Aorta (tissue), 5 donors: ENCODE measurements at regions of chr3 and their contacts with region 1.

Region 1: GRCh38 chr3:39107388-39108199 is at the starts of genes GORASP1 and TTC21A:
- DNase-seq: peak; percentile 95 to 96
- ATAC-seq: peak; percentile 95
- H3K4me3 ChIP-seq: peak within 1 kb of the TSS; percentile 71 to 86
- H3K27ac ChIP-seq: peak within 1 kb of the TSS; percentile 50 to 51
- H3K4me1 ChIP-seq: no peaks in the 10 kb centered on the region
- H3K27me3 ChIP-seq: no peaks in the 10 kb centered on the region
- total RNA-seq, gene GORASP1: 52.3 to 62.2 TPM
- total RNA-seq, gene TTC21A: 3.6 to 11.6 TPM

Region 2: GRCh38 chr3:38834110-38834509 is 273.5 kb before region 1 on chr3:
- intact Hi-C with region 1: no loop called
- DNase-seq: peak; percentile 82 to 83
- ATAC-seq: peak; percentile 81
- H3K4me3 ChIP-seq: no peak overlapping the region
- H3K27ac ChIP-seq: peak overlapping the region; percentile 1 to 2
- H3K4me1 ChIP-seq: no peaks in the 10 kb centered on the region
- H3K27me3 ChIP-seq: no peaks in the 10 kb centered on the region

Region 3: DNA sequence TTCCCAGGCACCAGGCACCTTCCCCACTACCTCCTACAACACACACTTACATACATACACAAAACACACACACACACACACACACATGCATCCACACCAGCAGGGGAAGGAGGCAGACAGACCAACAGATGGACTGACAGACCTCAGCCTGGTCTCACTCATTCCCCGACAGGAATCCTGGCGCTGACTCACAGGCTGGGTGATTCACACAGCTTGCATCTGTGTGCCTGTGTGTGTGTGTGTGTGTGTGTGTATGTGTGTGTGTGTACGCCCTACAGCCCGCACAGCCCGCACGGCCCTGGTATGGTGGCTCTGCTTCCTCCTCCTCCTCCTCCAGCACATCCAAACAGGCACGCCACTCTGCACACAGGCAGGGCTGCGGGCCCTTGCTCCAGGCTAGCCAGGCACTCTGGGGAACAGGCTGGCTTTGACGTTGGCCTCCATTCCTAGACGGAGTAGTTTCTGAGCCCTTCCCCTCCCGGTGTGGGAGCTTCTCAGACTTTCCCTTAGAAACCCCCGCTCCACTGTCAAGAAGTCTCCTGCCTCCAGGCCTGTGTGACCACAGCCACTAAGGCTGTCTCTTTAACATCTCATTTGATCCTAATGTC is 39.5 kb after region 1 on chr3:
- intact Hi-C with region 1: loop called in 1 of 2 experiments (anchors 2 kb)
- DNase-seq: peak; percentile 93 to 94
- ATAC-seq: peak; percentile 75
- H3K4me3 ChIP-seq: no peak overlapping the region
- H3K27ac ChIP-seq: peak overlapping the region; percentile 23 to 71
- H3K4me1 ChIP-seq: peaks cover 10% of the 10 kb centered on the region in 2 donors
- H3K27me3 ChIP-seq: no peaks in the 10 kb centered on the region

Region 4: DNA sequence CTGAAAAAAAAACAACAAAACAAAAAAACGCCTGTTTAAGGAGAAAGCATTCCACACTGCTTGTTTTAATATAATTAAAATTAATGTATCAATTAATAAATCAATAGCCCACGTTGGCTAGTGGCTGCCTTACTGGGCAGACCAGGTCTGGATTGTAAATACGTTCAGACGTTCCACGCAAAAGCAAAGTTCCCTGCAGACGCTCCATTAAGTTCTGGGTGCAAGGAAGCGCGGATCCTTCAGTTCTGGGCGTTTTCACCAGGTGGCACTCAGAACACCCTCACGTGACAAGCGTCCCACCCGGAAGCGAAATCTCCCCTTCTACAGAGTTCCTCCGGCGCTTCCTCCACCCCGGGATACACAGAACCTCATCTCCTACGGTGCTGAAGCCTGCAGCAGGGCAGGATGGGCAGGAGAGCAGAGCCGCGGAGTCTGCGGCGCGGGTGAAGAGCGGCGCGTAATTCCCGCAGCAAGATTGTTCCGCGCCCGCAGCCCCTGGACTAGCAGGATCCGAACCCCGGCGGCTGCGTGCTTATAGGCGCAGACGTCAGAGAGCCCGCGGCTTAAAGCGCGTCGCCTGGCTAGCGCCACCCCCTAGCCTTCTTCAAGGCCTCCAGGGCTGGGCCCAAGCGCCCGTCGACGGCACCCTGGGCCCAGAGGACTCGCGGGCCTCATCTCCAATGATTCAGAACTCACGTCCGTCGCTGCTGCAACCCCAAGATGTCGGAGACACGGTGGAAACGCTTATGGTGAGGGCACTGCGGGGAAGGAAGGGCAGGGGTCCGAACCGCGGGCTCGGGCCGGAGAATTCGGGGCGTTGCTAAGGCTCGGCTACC is 275.7 kb after region 1 on chr3 and contains the start of gene SLC25A38:
- intact Hi-C with region 1: loop called (anchors 5 to 10 kb)
- DNase-seq: peak; percentile 89 to 90
- ATAC-seq: peak; percentile 93
- H3K4me3 ChIP-seq: peak within 1 kb of the TSS; percentile 29 to 85
- H3K27ac ChIP-seq: peak within 1 kb of the TSS; percentile 84 to 95
- H3K4me1 ChIP-seq: peaks cover 0 to 3% of the 10 kb centered on the region in 2 donors
- H3K27me3 ChIP-seq: no peaks in the 10 kb centered on the region
- total RNA-seq, gene SLC25A38: 18.0 to 18.6 TPM

Region 5: GRCh38 chr3:40677321-40677720 is 1569.7 kb after region 1 on chr3:
- intact Hi-C with region 1: no loop called
- DNase-seq: no peak
- ATAC-seq: no peak
- H3K4me3 ChIP-seq: no peak overlapping the region
- H3K27ac ChIP-seq: no peak overlapping the region
- H3K4me1 ChIP-seq: no peaks in the 10 kb centered on the region
- H3K27me3 ChIP-seq: no peaks in the 10 kb centered on the region